Activated CD4-positive, alpha-beta memory T cell treated with anti-CD3 and anti-CD28 coated beads, Interleukin-2, amount 10 ng/mL, durations not matched to agents 7 days and 5 days (primary cell): ENCODE measurements at regions of chr4 and their contacts with region 1.

Region 1: DNA sequence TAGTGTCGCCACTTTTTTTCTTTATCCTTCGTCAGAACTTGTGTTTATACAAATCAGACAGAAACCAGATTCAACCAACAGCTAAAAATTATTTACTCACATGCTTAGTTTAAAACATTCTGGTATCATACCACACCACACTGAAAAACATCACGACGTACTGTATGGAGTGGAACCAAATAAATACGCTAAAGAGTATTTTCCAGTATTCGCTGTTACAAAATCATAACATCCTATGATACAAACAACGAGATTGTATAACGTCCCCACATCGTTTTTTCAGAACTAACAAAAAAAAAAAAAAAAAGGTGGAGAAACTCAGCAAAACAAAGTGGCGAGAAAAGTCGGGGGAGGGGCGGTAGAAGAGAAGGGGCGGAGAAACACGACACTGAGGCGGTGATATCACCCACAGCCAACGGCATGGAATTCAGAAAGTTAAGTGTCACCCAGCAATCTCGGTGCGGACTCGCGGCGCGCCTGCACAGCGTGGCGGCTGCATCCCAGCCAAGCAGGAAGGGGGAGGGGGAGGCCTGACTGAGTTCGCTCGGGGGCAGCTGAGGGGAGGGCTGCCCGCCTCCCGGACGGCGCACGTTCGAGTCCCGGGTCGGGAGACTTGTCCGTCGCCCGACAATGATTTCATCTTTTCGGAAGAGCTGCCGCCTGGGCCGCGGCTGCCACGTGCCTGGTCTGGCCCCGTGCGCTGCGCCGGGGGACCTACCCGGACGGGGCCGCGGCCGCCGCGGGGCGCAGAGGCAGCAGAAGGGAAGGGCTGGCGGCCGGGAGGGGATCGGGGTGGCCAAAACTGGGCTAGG is 920 bp downstream of the SETD7 start:
- DNase-seq: peak; percentile 85
- H3K4me3 Mint-ChIP-seq: peak overlapping the region; percentile 98
- H3K27ac Mint-ChIP-seq: peak overlapping the region; percentile 94
- H3K4me1 Mint-ChIP-seq: peaks cover 60% of the 10 kb centered on the region
- H3K27me3 Mint-ChIP-seq: no peaks in the 10 kb centered on the region

Region 2: GRCh38 chr4:139083956-139084803 is 470.9 kb before region 1 on chr4:
- CTCF ChIA-PET with region 1: no interaction called
- POLR2A ChIA-PET with region 1: interaction called, 10 read pairs
- DNase-seq: peak; percentile 86
- H3K4me3 Mint-ChIP-seq: peak overlapping the region; percentile 80
- H3K27ac Mint-ChIP-seq: peak overlapping the region; percentile 98
- H3K4me1 Mint-ChIP-seq: peaks cover 39% of the 10 kb centered on the region
- H3K27me3 Mint-ChIP-seq: no peaks in the 10 kb centered on the region

Region 3: GRCh38 chr4:139453371-139454110 is 101.6 kb before region 1 on chr4:
- CTCF ChIA-PET with region 1: interaction called, 5 read pairs
- POLR2A ChIA-PET with region 1: interaction called, 31 read pairs
- DNase-seq: peak; percentile 98
- H3K4me3 Mint-ChIP-seq: peak overlapping the region; percentile 93
- H3K27ac Mint-ChIP-seq: peak overlapping the region; percentile 100
- H3K4me1 Mint-ChIP-seq: peaks cover 59% of the 10 kb centered on the region
- H3K27me3 Mint-ChIP-seq: no peaks in the 10 kb centered on the region

Region 4: GRCh38 chr4:139540632-139541031 is 14.5 kb before region 1 on chr4:
- CTCF ChIA-PET with region 1: interaction called, 3 read pairs
- POLR2A ChIA-PET with region 1: interaction called, 14 read pairs
- DNase-seq: no peak
- H3K4me3 Mint-ChIP-seq: no peak overlapping the region
- H3K27ac Mint-ChIP-seq: no peak overlapping the region
- H3K4me1 Mint-ChIP-seq: no peaks in the 10 kb centered on the region
- H3K27me3 Mint-ChIP-seq: no peaks in the 10 kb centered on the region

Region 5: GRCh38 chr4:139567159-139567870 is 12.2 kb after region 1 on chr4:
- CTCF ChIA-PET with region 1: interaction called, 5 read pairs
- POLR2A ChIA-PET with region 1: interaction called, 11 read pairs
- DNase-seq: no peak
- H3K4me3 Mint-ChIP-seq: no peak overlapping the region
- H3K27ac Mint-ChIP-seq: no peak overlapping the region
- H3K4me1 Mint-ChIP-seq: peaks cover under 1% of the 10 kb centered on the region
- H3K27me3 Mint-ChIP-seq: no peaks in the 10 kb centered on the region

Region 6: GRCh38 chr4:139603576-139604387 is 48.7 kb after region 1 on chr4:
- CTCF ChIA-PET with region 1: interaction called, 22 read pairs
- POLR2A ChIA-PET with region 1: interaction called, 4 read pairs
- DNase-seq: peak; percentile 41
- H3K4me3 Mint-ChIP-seq: no peak overlapping the region
- H3K27ac Mint-ChIP-seq: no peak overlapping the region
- H3K4me1 Mint-ChIP-seq: peaks cover 27% of the 10 kb centered on the region
- H3K27me3 Mint-ChIP-seq: peaks cover 24% of the 10 kb centered on the region

Region 7: GRCh38 chr4:139656614-139657486 is 101.8 kb after region 1 on chr4:
- CTCF ChIA-PET with region 1: interaction called, 11 read pairs
- POLR2A ChIA-PET with region 1: interaction called, 11 read pairs
- DNase-seq: peak; percentile 61
- H3K4me3 Mint-ChIP-seq: peak overlapping the region; percentile 53
- H3K27ac Mint-ChIP-seq: peak overlapping the region; percentile 97
- H3K4me1 Mint-ChIP-seq: peaks cover 40% of the 10 kb centered on the region
- H3K27me3 Mint-ChIP-seq: peaks cover 4% of the 10 kb centered on the region

Region 8: GRCh38 chr4:139715746-139716391 is 160.8 kb after region 1 on chr4:
- CTCF ChIA-PET with region 1: no interaction called
- POLR2A ChIA-PET with region 1: no interaction called
- DNase-seq: no peak
- H3K4me3 Mint-ChIP-seq: no peak overlapping the region
- H3K27ac Mint-ChIP-seq: no peak overlapping the region
- H3K4me1 Mint-ChIP-seq: peaks cover 3% of the 10 kb centered on the region
- H3K27me3 Mint-ChIP-seq: peaks cover 2% of the 10 kb centered on the region

Region 9: DNA sequence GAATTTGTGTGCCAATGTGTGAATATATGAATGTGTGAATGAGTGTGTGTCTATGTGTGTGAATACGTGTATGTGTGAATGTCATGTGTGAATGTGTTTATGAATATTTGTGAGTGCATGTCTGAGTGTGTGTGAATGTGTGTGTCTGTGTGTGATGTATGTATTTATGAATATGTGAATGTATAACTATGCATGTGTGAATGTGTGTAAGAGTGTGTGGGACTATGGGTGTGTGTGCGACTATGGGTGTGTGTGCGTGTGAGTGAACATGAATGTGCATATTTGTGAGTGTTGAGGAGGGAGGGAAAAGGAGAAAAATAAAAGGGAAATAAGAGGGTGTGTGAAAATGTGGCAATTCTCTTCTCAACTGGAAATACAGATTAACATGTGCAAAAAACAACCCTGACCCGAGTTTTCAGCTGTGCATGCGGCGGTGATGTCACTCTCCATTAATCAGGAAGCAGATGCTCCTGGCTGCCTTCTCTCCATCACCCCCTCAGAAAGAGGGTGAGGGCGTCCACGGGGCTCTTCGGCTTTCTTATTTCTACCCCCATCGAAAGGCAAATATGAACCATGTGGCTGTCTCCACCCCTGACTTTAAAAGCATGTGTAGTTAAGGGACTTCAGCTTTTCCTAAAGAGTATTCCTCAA is 379.1 kb after region 1 on chr4:
- CTCF ChIA-PET with region 1: no interaction called
- POLR2A ChIA-PET with region 1: no interaction called
- DNase-seq: no peak
- H3K4me3 Mint-ChIP-seq: no peak overlapping the region
- H3K27ac Mint-ChIP-seq: no peak overlapping the region
- H3K4me1 Mint-ChIP-seq: no peaks in the 10 kb centered on the region
- H3K27me3 Mint-ChIP-seq: peaks cover 12% of the 10 kb centered on the region